ENCODE measurements at regions of chr2 and their contacts with region 1.

Region 1: GRCh38 chr2:142796161-142796560 is 81.3 kb upstream of the KYNU start:
- DNase-seq: no peak
- H3K4me3 ChIP-seq: no peak overlapping the region
- H3K27ac ChIP-seq: no peak overlapping the region
- H3K4me1 ChIP-seq: no peaks in the 10 kb centered on the region
- H3K27me3 ChIP-seq: no peaks in the 10 kb centered on the region
- CTCF ChIP-seq: no peak

Region 2: DNA sequence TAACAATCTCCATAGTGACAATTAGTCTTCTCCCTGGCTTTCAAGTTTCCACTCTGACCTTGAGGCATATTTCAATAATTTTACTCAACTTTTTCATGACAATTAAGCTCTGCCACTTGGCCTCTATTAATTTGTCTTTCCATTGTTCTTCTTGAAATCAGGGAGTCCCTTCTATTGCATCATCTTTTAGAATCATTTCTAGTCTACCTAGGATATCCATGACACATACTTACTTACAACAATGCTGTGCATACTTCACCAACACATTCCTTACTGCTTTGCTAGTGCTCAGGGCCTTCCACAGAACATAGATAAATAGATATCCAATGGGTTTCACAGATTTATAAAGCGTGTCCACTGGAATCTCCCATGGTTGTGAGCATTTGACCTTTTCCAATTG is 333.9 kb before region 1 on chr2:
- intact Hi-C with region 1: no loop called
- DNase-seq: no peak
- H3K4me3 ChIP-seq: no peak overlapping the region
- H3K27ac ChIP-seq: no peak overlapping the region
- H3K4me1 ChIP-seq: no peaks in the 10 kb centered on the region
- H3K27me3 ChIP-seq: no peaks in the 10 kb centered on the region
- CTCF ChIP-seq: no peak

Region 3: DNA sequence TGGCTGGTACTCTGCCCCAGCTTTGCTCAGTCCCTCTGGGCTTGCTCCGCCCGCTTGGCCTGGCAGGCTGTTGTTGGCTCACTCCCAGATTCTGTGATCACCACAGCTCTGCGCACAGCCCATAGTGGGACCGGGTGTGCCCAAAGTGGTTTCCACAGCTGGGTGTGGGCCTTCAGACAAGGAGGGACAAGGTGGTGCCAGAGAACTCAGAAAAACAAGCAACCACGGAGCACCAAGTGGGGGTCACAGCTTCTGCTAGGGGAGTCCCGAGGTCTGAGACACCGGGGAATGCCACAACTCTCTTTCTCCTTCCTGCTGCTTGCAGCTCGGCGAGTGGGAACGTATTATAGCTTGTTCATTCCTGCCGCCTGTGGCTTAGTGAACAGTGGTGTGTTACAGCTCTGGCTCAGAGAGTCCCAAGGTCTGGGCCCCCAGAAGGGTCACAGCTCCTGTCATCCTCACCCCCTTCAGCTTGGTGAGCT is 72.2 kb after region 1 on chr2:
- intact Hi-C with region 1: no loop called
- DNase-seq: peak; percentile 86
- H3K4me3 ChIP-seq: no peak overlapping the region
- H3K27ac ChIP-seq: peak overlapping the region; percentile 38
- H3K4me1 ChIP-seq: peaks cover 4% of the 10 kb centered on the region
- H3K27me3 ChIP-seq: no peaks in the 10 kb centered on the region
- CTCF ChIP-seq: no peak

Region 4: DNA sequence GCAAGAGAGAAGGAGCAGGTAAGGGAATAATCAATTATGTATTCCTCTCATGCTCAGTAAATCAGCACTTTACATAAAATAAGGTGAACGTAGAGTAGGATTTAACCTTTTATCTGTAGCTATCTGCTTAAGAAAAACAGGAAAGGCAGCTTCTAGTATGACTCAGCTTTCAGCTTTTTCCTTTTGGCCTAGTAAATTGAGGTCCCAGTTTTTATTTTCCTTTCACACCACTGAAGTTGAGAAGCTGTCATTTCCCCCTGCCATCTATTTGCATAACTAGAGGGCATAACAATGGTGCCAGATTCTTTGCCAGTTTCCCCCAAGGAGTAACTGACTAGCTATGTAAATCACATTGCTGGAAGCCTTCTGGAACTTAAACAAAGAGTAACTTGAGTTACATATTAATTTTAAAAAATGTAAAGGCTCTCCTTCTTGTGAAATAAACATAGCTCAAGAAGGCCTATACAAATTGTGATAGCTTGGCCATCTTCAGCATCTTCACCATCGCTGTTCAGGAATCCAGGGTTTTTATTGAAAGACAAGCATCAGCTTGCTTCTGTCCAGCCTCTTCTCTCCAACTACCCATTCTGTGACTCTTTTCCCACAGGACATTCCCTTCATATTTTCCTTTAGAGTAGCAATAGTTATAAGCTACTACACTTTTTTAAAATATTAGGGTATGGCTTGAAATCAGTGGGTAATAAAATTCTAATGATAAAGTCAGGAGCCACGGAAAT is 178.3 kb after region 1 on chr2:
- intact Hi-C with region 1: loop called (anchors 5 kb)
- DNase-seq: no peak
- H3K4me3 ChIP-seq: no peak overlapping the region
- H3K27ac ChIP-seq: no peak overlapping the region
- H3K4me1 ChIP-seq: no peaks in the 10 kb centered on the region
- H3K27me3 ChIP-seq: no peaks in the 10 kb centered on the region
- CTCF ChIP-seq: no peak

Measured in colonic mucosa (tissue), 4 donors.